Esophagus muscularis mucosa (tissue), 4 donors: ENCODE measurements at regions of chr17 and their contacts with region 1.

Region 1: GRCh38 chr17:58019039-58019438 is 12.0 kb upstream of the SRSF1 start:
- DNase-seq: no peak
- H3K4me3 ChIP-seq: no peak overlapping the region
- H3K27ac ChIP-seq: no peak overlapping the region
- H3K4me1 ChIP-seq: no peaks in the 10 kb centered on the region
- H3K27me3 ChIP-seq: no peaks in the 10 kb centered on the region
- CTCF ChIP-seq: no peak
- EP300 ChIP-seq: no peak
- POLR2A ChIP-seq: no peak

Region 2: GRCh38 chr17:57955183-57955931 is 63.7 kb before region 1 on chr17 and contains the start of gene CUEDC1:
- intact Hi-C with region 1: no loop called
- DNase-seq: peak; percentile 91
- H3K4me3 ChIP-seq: peak within 1 kb of the TSS; percentile 84 to 98 (median 94)
- H3K27ac ChIP-seq: peak within 1 kb of the TSS; percentile 98 to 100 (median 100)
- H3K4me1 ChIP-seq: peaks cover 49 to 61% (median 53%) of the 10 kb centered on the region in 4 donors
- H3K27me3 ChIP-seq: no peaks in the 10 kb centered on the region
- CTCF ChIP-seq: peak; percentile 32 to 69 (median 38)
- EP300 ChIP-seq: no peak
- POLR2A ChIP-seq: no peak
- total RNA-seq, gene CUEDC1: 30.3 to 72.2 (median 51.2) TPM

Region 3: GRCh38 chr17:58344047-58344790 is 325.2 kb after region 1 on chr17:
- intact Hi-C with region 1: loop called (anchors 10 kb)
- DNase-seq: no peak
- H3K4me3 ChIP-seq: no peak overlapping the region
- H3K27ac ChIP-seq: no peak overlapping the region
- H3K4me1 ChIP-seq: peaks cover 0 to 14% (median 1%) of the 10 kb centered on the region in 4 donors
- H3K27me3 ChIP-seq: no peaks in the 10 kb centered on the region
- CTCF ChIP-seq: no peak
- EP300 ChIP-seq: no peak
- POLR2A ChIP-seq: no peak